ENCODE measurements at regions of chr9 and their contacts with region 1.

Region 1: GRCh38 chr9:36258208-36258988 is at the start of gene GNE:
- DNase-seq: peak; percentile 98
- H3K4me3 ChIP-seq: peak within 1 kb of the TSS; percentile 96
- H3K27ac ChIP-seq: peak within 1 kb of the TSS; percentile 88
- H3K4me1 ChIP-seq: no peaks in the 10 kb centered on the region
- H3K27me3 ChIP-seq: no peaks in the 10 kb centered on the region
- CTCF ChIP-seq: no peak
- total RNA-seq, gene GNE: 20.6 and 23.7 TPM in 2 replicates

Region 2: DNA sequence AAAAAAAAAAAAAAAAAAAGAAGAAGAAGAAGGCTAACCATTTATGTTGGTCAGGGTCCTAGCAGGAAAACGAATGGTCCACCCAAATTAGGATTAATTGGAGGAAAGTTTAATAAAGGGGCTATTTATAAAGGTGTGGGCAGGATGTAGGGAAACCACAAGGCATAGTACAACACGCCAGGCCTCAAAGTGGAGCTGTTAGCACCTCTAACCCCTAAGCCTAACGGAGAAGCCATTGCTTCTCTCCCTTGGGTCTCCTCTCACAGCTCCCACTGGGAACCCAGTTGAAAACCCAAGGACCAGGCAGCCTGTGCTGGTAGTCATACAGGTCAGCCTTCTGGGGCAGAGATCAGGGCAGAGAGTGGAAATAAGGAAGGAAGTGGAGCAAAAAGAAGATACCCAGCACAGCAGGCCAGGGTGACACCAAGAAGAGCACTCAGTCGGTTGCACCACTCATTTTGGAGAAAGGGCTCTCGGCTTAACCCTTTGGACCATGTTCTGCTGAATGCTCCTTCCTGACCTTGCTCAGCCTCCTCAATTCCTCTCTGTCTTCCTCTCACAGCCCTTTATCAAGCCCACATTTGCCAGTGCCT is 130.7 kb before region 1 on chr9:
- CTCF ChIA-PET with region 1: no interaction called
- POLR2A ChIA-PET with region 1: interaction called, 31 read pairs
- intact Hi-C with region 1: no loop called
- DNase-seq: no peak
- H3K4me3 ChIP-seq: no peak overlapping the region
- H3K27ac ChIP-seq: no peak overlapping the region
- H3K4me1 ChIP-seq: no peaks in the 10 kb centered on the region
- H3K27me3 ChIP-seq: no peaks in the 10 kb centered on the region
- CTCF ChIP-seq: no peak

Region 3: GRCh38 chr9:36148311-36149051 is 109.9 kb before region 1 on chr9:
- CTCF ChIA-PET with region 1: no interaction called
- POLR2A ChIA-PET with region 1: no interaction called
- intact Hi-C with region 1: no loop called
- DNase-seq: peak; percentile 48
- H3K4me3 ChIP-seq: no peak overlapping the region
- H3K27ac ChIP-seq: no peak overlapping the region
- H3K4me1 ChIP-seq: no peaks in the 10 kb centered on the region
- H3K27me3 ChIP-seq: no peaks in the 10 kb centered on the region
- CTCF ChIP-seq: no peak